ENCODE measurements at regions of chr16 and their contacts with region 1.

Region 1: DNA sequence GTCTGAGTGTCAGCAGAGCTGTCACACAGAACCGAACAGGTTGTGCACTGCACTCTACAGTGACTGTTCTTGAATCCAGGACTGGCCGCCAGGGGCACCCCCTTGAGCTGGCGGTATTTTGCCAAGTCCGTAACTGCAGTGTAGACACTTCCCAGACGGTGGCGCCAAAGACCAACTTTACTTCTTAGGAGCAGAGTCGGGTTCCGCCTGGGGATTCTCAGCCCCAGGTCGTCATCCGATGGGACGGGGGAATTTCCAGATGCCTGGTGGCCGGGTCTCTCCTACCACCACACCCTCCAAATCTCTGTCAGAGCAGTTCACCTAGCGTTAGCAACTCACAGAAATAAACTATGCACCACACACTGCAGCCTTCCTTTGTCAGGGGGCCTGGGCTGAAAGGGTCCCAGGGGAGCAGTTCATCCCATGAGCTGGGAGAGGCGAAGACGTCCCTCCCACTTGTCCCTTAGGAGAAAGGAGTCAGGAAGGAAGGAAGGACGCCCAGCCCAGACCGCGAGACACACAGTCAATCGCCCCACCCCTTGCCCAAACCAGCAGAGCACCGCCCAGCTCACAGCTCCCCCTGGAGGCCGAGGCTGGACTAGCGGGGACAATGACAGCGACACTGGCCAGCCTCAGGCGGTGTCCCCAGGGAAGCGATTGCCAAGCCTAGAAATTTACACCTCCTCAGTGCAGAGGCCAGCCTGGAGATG is 7.4 kb upstream of the RIPOR1 start:
- DNase-seq: peak; percentile 98
- H3K4me3 Mint-ChIP-seq: peak overlapping the region; percentile 81
- H3K27ac Mint-ChIP-seq: peak overlapping the region; percentile 97
- H3K4me1 Mint-ChIP-seq: peaks cover 34% of the 10 kb centered on the region
- H3K27me3 Mint-ChIP-seq: peaks cover 14% of the 10 kb centered on the region

Region 2: DNA sequence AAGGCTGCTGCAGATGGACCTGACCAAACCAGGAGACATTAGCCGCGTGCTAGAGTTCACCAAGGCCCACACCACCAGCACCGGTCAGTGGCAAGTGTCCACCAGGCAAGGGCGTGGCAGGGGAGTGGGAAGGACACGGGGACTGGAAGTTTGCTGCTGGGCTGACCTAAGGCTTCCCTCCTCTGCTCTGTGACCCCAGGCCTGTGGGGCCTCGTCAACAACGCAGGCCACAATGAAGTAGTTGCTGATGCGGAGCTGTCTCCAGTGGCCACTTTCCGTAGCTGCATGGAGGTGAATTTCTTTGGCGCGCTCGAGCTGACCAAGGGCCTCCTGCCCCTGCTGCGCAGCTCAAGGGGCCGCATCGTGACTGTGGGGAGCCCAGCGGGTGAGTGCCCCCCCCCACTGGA is 85.5 kb before region 1 on chr16:
- CTCF ChIA-PET with region 1: no interaction called
- POLR2A ChIA-PET with region 1: no interaction called
- DNase-seq: no peak
- H3K4me3 Mint-ChIP-seq: no peak overlapping the region
- H3K27ac Mint-ChIP-seq: no peak overlapping the region
- H3K4me1 Mint-ChIP-seq: peaks cover 4% of the 10 kb centered on the region
- H3K27me3 Mint-ChIP-seq: peaks cover 9% of the 10 kb centered on the region

Region 3: GRCh38 chr16:67499106-67499505 is 22.1 kb before region 1 on chr16:
- CTCF ChIA-PET with region 1: interaction called, 261 read pairs
- POLR2A ChIA-PET with region 1: interaction called, 3 read pairs
- DNase-seq: no peak
- H3K4me3 Mint-ChIP-seq: no peak overlapping the region
- H3K27ac Mint-ChIP-seq: peak overlapping the region; percentile 51
- H3K4me1 Mint-ChIP-seq: peaks cover 30% of the 10 kb centered on the region
- H3K27me3 Mint-ChIP-seq: no peaks in the 10 kb centered on the region

Region 4: GRCh38 chr16:67537270-67537635 is 16.0 kb after region 1 on chr16:
- CTCF ChIA-PET with region 1: interaction called, 71 read pairs
- POLR2A ChIA-PET with region 1: interaction called, 11 read pairs
- DNase-seq: peak; percentile 61
- H3K4me3 Mint-ChIP-seq: peak overlapping the region; percentile 68
- H3K27ac Mint-ChIP-seq: peak overlapping the region; percentile 23
- H3K4me1 Mint-ChIP-seq: peaks cover 26% of the 10 kb centered on the region
- H3K27me3 Mint-ChIP-seq: peaks cover 39% of the 10 kb centered on the region

Region 5: DNA sequence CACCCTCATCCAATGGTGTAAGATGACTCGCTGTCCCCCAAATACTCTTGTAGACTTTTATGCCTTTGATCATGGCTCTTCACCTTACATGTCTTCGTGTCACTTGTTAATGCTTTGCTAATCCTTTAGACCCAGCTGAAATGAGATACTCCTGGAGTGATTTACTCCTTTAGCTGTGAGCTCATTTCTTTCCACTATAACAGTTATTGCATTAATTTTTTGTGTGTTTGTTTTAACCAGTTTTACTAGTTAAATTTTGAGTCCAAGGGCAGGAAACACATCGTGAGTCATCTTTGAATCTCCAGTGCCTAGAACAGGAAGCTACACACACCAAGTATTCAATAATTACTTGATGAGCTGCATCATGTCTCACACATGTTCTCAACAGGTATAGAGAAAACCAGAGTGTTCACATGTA is 34.6 kb after region 1 on chr16:
- CTCF ChIA-PET with region 1: interaction called, 56 read pairs
- POLR2A ChIA-PET with region 1: interaction called, 3 read pairs
- DNase-seq: no peak
- H3K4me3 Mint-ChIP-seq: peak overlapping the region; percentile 19
- H3K27ac Mint-ChIP-seq: peak overlapping the region; percentile 97
- H3K4me1 Mint-ChIP-seq: peaks cover 53% of the 10 kb centered on the region
- H3K27me3 Mint-ChIP-seq: no peaks in the 10 kb centered on the region

Region 6: DNA sequence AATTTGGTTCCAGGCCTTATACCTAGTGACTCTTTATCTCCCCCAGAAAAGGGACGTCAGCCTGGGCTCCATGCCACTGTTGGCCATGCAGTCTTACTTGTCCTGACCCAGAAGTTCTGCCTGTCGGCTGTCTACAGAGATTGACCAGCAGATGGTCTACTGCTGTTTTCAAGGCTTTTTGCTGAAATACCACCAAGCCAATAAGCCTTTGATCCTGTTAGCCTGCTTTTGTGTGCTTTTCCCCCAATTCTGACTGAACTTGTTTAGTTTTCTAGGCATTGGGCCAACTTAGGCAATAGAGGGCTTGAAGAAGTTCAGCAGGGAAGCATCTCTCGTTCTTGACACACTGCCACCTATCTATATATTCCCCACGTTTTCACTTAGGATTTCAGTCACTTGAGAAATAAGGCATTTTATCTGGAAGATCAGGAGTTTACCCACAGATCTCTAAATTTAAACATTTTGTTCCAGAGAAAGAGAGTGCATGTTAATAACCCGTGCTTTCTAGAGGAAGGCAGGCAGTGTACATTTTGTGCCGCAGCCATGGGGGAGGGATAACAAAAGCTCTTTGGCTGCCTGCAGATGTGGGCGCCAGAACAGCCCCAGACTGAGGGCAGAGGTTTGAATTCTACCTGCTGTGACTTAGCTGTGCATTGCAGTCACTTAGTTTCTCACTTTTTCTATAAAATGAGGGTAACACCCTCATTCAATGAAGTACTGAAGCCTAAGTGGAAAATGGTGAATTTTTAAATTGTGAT is 111.3 kb after region 1 on chr16:
- CTCF ChIA-PET with region 1: interaction called, 11 read pairs
- POLR2A ChIA-PET with region 1: no interaction called
- DNase-seq: no peak
- H3K4me3 Mint-ChIP-seq: no peak overlapping the region
- H3K27ac Mint-ChIP-seq: peak overlapping the region; percentile 21
- H3K4me1 Mint-ChIP-seq: no peaks in the 10 kb centered on the region
- H3K27me3 Mint-ChIP-seq: no peaks in the 10 kb centered on the region

Region 7: GRCh38 chr16:67652578-67653127 is 131.4 kb after region 1 on chr16:
- CTCF ChIA-PET with region 1: interaction called, 179 read pairs
- POLR2A ChIA-PET with region 1: no interaction called
- DNase-seq: no peak
- H3K4me3 Mint-ChIP-seq: no peak overlapping the region
- H3K27ac Mint-ChIP-seq: no peak overlapping the region
- H3K4me1 Mint-ChIP-seq: peaks cover 10% of the 10 kb centered on the region
- H3K27me3 Mint-ChIP-seq: no peaks in the 10 kb centered on the region

Region 8: DNA sequence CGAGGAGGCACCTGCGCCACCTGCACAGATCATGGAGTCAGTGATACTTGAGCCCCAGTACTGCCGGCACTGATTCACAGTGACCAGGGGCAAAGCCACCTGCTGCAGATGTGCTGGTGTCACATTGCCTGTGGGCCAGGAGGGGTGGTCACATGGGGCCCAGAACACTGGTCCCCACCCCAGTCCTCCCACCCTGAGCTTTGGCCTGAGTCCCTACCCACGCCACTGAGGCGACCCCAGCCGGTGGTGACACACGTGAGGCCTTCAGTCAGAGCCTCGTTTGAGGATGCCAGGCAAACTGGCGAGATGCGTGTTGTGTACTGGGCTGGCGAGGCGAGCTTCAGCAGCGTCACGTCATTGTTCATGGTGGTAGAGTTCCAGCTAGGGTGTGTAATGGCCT is 408.9 kb after region 1 on chr16:
- CTCF ChIA-PET with region 1: no interaction called
- POLR2A ChIA-PET with region 1: no interaction called
- DNase-seq: no peak
- H3K4me3 Mint-ChIP-seq: no peak overlapping the region
- H3K27ac Mint-ChIP-seq: no peak overlapping the region
- H3K4me1 Mint-ChIP-seq: peaks cover 17% of the 10 kb centered on the region
- H3K27me3 Mint-ChIP-seq: no peaks in the 10 kb centered on the region